HCT116 (cell line): ENCODE measurements at regions of chr9 and their contacts with region 1.

Region 1: GRCh38 chr9:113275157-113276131 is at the starts of genes CDC26 and PRPF4:
- DNase-seq: peak; percentile 95
- ATAC-seq: peak; percentile 86
- H3K4me3 ChIP-seq: peak within 1 kb of the TSS; percentile 71 to 73
- H3K27ac ChIP-seq: peak within 1 kb of the TSS; percentile 70
- H3K4me1 ChIP-seq: peaks cover 3 to 14% of the 10 kb centered on the region in 2 experiments; a peak in 3 of 4 replicates
- H3K27me3 ChIP-seq: no peaks in the 10 kb centered on the region
- CTCF ChIP-seq: no peak
- POLR2A ChIP-seq: peak; percentile 92
- RAD21 ChIP-seq: no peak
- total RNA-seq, gene CDC26: 22.0 TPM
- total RNA-seq, gene PRPF4: 53.9 TPM

Region 2: DNA sequence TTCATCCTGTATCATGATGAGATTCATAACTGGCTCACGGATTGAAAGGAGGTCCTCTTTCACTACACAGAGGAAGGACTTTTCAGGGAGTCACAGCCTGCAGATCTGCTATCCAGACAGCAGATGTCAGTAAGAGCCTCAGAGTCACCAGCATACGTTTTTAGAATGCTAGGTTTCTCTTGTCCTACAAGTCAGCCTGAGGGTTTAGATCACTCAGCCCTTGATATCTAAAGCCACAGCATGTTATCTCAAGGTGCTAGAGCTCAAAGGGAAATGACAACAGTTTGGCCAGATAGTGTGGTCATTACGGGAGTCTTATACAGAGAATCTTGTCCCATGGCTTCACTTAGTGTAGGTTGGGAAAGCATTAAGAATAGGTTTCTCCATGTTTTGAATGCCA is 353.9 kb before region 1 on chr9:
- CTCF ChIA-PET with region 1: no interaction called
- POLR2A ChIA-PET with region 1: no interaction called
- RAD21 ChIA-PET with region 1: no interaction called
- intact Hi-C with region 1: loop called (anchors 10 kb)
- DNase-seq: peak; percentile 22
- ATAC-seq: peak; percentile 85
- H3K4me3 ChIP-seq: no peak overlapping the region
- H3K27ac ChIP-seq: no peak overlapping the region
- H3K4me1 ChIP-seq: peaks cover 0 to 16% of the 10 kb centered on the region in 2 experiments; a peak in 2 of 4 replicates
- H3K27me3 ChIP-seq: no peaks in the 10 kb centered on the region
- CTCF ChIP-seq: peak; percentile 56 to 69 (median 64)
- POLR2A ChIP-seq: no peak
- RAD21 ChIP-seq: peak; percentile 68

Region 3: GRCh38 chr9:113221003-113221799 is 54.2 kb before region 1 on chr9 and contains the starts of genes FKBP15 and SLC31A1:
- CTCF ChIA-PET with region 1: interaction called, 3 read pairs
- POLR2A ChIA-PET with region 1: interaction called, 11 read pairs
- RAD21 ChIA-PET with region 1: no interaction called
- intact Hi-C with region 1: no loop called
- DNase-seq: peak; percentile 97
- ATAC-seq: peak; percentile 99
- H3K4me3 ChIP-seq: peak within 1 kb of the TSS; percentile 81 to 84
- H3K27ac ChIP-seq: peak within 1 kb of the TSS; percentile 65
- H3K4me1 ChIP-seq: peaks cover 2 to 21% of the 10 kb centered on the region in 2 experiments; a peak in 3 of 4 replicates
- H3K27me3 ChIP-seq: no peaks in the 10 kb centered on the region
- CTCF ChIP-seq: no peak
- POLR2A ChIP-seq: peak; percentile 36
- RAD21 ChIP-seq: no peak
- total RNA-seq, gene FKBP15: 13.8 TPM
- total RNA-seq, gene SLC31A1: 24.4 TPM

Region 4: DNA sequence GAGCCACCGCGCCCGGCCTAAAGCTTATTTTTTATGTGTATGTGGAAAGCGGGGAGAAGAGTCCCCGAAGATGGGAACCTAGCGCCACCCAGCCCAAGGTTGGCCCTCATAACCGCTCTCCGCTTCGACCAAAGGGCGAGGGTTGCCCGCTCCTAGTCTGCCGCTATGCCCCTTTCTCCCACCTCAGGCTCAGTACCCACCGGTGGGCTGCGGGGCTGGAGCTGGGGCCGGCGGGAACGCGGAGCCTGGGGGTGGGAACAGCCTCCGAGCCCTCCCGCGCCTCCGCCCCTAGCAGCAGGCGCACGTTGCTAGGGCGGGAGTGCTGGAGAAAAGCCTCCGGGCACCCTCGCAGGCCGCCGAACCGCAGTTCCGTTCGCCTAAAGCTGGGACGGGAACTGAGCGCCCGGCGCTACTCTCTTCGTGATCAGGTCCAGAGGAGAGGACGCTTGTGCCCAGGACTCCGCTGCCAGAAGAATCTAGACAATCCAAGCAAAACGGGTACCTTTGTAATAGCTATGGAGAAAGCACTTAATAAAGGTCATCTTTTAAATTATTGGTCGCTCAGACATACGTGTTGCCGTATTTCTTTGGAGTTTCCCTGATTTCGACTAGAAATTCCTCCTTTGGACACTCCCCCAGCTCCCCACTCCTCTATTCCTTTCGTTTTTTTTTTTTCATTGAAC is 64.7 kb after region 1 on chr9 and contains the start of gene WDR31:
- CTCF ChIA-PET with region 1: interaction called, 3 read pairs
- POLR2A ChIA-PET with region 1: no interaction called
- RAD21 ChIA-PET with region 1: no interaction called
- intact Hi-C with region 1: loop called (anchors 1 kb)
- DNase-seq: peak; percentile 71
- ATAC-seq: peak; percentile 96
- H3K4me3 ChIP-seq: peak within 1 kb of the TSS; percentile 85
- H3K27ac ChIP-seq: peak within 1 kb of the TSS; percentile 63
- H3K4me1 ChIP-seq: peaks cover 14 to 28% of the 10 kb centered on the region in 2 experiments
- H3K27me3 ChIP-seq: no peaks in the 10 kb centered on the region
- CTCF ChIP-seq: no peak
- POLR2A ChIP-seq: peak; percentile 54
- RAD21 ChIP-seq: no peak
- total RNA-seq, gene WDR31: 5.9 TPM

Region 5: DNA sequence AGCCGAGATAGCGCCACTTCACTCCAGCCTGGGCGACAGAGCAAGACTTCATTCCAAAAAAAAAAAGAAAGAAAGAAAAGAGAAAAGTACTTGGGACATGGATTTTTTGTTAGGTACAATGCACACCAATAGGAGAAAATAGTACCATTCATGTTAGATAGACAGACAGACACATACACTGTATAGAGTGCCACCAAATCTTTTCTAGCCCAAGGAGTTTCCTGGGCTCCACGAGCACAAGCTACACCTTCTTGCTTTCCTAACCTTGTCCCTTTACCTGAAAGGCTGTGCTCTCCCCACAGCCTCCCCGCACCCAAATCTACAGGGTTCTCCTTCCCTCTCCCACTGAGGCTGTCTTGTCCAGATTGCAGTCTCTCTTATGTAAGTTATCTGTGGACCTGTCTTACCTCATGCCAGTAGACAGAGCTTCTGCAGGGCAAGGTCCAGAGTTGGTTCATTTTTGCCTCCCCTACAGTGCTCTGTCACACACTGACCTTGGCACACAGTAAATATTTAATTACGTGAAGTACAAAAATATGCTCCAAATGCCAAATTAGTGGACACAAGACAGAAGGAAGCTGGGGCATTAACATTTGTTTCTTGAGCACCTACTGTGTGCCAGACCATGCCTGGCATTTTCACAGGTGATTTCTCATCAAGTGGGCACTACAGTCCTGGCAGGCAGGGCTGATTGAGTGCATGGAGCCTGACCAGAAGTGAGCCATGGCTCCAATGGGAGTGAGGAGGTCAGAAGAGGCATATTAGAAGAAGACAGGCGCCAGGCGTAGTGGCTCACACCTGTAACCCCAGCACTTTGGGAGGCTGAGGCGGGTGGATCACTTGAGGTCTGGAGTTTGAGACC is 119.8 kb after region 1 on chr9:
- CTCF ChIA-PET with region 1: no interaction called
- POLR2A ChIA-PET with region 1: no interaction called
- RAD21 ChIA-PET with region 1: no interaction called
- intact Hi-C with region 1: no loop called
- DNase-seq: no peak
- ATAC-seq: no peak
- H3K4me3 ChIP-seq: no peak overlapping the region
- H3K27ac ChIP-seq: no peak overlapping the region
- H3K4me1 ChIP-seq: peaks cover 2 to 4% of the 10 kb centered on the region in 2 experiments; a peak in 2 of 4 replicates
- H3K27me3 ChIP-seq: no peaks in the 10 kb centered on the region
- CTCF ChIP-seq: no peak
- POLR2A ChIP-seq: no peak
- RAD21 ChIP-seq: no peak

Region 6: DNA sequence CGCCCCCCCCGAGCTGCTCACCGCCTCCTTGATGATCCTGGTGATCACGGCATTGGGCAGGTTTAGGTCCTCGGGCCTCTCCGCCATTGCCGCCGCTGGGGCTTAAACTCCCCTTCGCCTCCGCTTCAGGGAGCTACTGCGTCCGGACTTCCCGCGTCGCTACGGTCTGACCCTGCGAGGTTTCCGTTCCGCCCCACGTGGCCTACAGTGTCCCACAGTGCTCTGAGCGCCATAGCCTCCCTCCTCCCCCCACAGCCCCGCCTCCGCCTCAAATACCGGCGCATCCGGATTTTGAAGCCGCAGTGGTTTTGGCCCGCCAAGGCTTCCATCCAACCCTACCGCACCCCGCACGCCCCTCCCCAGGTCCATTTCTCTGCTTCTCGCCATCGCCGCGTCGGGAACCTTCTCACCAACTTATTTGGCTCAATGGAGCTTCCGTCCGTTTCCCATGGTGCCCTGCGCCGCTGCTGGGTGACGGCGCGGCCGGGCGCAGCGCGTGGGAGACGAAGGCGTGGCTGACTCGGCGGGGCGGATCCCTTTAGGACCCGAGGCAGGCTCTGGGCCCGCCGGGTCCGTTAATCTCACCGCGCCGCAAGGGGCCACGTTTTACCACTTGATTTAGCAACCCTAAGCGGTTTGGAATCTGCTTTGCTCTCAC is 134.9 kb after region 1 on chr9 and contains the starts of genes C9orf43 and POLE3:
- CTCF ChIA-PET with region 1: interaction called, 7 read pairs
- POLR2A ChIA-PET with region 1: interaction called, 8 read pairs
- RAD21 ChIA-PET with region 1: no interaction called
- intact Hi-C with region 1: loop called (anchors 1 kb)
- DNase-seq: peak; percentile 92
- ATAC-seq: peak; percentile 91
- H3K4me3 ChIP-seq: peak within 1 kb of the TSS; percentile 95 to 98
- H3K27ac ChIP-seq: peak within 1 kb of the TSS; percentile 89
- H3K4me1 ChIP-seq: peaks cover 6 to 17% of the 10 kb centered on the region in 2 experiments
- H3K27me3 ChIP-seq: no peaks in the 10 kb centered on the region
- CTCF ChIP-seq: no peak
- POLR2A ChIP-seq: peak; percentile 88
- RAD21 ChIP-seq: no peak
- total RNA-seq, gene C9orf43: 0.71 TPM
- total RNA-seq, gene POLE3: 65.1 TPM